Endothelial cell of umbilical vein (primary cell): ENCODE measurements at regions of chr21 and their contacts with region 1.

Region 1: DNA sequence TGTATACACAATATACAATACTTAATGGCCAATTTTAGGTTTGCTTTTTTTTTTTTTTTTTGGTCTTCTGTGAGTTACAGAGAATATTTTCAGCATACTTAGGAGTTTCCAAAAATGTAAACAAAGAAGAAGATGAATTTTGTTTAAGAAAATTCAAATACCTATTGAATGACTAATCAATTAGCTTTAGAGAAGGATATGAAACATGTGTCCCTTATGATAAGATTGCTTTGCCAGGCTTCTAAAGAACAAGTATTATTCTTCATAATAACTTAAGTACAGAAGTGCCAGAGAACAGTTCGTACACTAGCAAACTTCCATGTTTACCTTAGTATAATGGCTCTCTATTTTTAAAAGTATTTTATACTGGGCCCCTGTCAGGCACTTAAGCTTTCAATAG is 1191.0 kb upstream of the NCAM2 start:
- DNase-seq: peak; percentile 35
- H3K4me3 ChIP-seq: no peak overlapping the region
- H3K27ac ChIP-seq: peak overlapping the region; percentile 65
- H3K4me1 ChIP-seq: peaks cover 34% of the 10 kb centered on the region
- H3K27me3 ChIP-seq: no peaks in the 10 kb centered on the region
- CTCF ChIP-seq: no peak
- POLR2A ChIP-seq: no peak

Region 2: DNA sequence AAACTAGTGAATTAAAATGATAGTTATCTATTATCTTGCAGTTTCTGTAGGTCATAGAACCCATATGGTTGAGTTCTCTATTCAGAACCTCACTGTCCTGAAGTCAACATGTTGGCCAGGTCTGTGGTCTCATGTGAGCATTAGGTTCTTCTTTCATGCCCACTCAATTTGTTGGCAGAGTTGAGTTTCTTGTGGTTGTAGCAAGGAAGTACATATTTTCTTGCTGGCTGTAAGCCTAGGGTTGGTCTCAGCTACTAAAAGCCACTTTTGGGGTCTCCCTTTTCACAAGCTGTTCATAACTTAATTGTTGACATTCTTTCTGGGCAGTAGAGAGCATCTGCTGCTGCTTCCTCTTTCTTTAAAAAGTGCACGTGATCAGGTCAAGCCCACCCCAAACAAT is 25.9 kb after region 1 on chr21:
- CTCF ChIA-PET with region 1: interaction called, 3 read pairs
- POLR2A ChIA-PET with region 1: no interaction called
- dilution Hi-C with region 1: no loop called
- intact Hi-C with region 1: loop called (anchors 2 kb)
- DNase-seq: no peak
- H3K4me3 ChIP-seq: no peak overlapping the region
- H3K27ac ChIP-seq: no peak overlapping the region
- H3K4me1 ChIP-seq: peaks cover 3% of the 10 kb centered on the region
- H3K27me3 ChIP-seq: no peaks in the 10 kb centered on the region
- CTCF ChIP-seq: no peak
- POLR2A ChIP-seq: no peak

Region 3: GRCh38 chr21:20004367-20004766 is 197.2 kb after region 1 on chr21:
- CTCF ChIA-PET with region 1: no interaction called
- POLR2A ChIA-PET with region 1: no interaction called
- dilution Hi-C with region 1: no loop called
- intact Hi-C with region 1: loop called (anchors 1 kb)
- DNase-seq: peak; percentile 89
- H3K4me3 ChIP-seq: no peak overlapping the region
- H3K27ac ChIP-seq: peak overlapping the region; percentile 48
- H3K4me1 ChIP-seq: peaks cover 3% of the 10 kb centered on the region
- H3K27me3 ChIP-seq: no peaks in the 10 kb centered on the region
- CTCF ChIP-seq: no peak
- POLR2A ChIP-seq: no peak